Common myeloid progenitor, CD34-positive (primary cell): ENCODE measurements at regions of chr4 and their contacts with region 1.

Region 1: GRCh38 chr4:27010334-27010940 is 149.8 kb downstream of the STIM2 start:
- DNase-seq: peak; percentile 63 to 81 (median 73)
- H3K4me3 ChIP-seq: no peak overlapping the region
- H3K27ac ChIP-seq: no peak overlapping the region
- H3K4me1 ChIP-seq: no peaks in the 10 kb centered on the region
- H3K27me3 ChIP-seq: no peaks in the 10 kb centered on the region

Region 2: GRCh38 chr4:26490111-26490959 is 520.1 kb before region 1 on chr4 and contains the start of gene CCKAR:
- CTCF ChIA-PET with region 1: no interaction called
- POLR2A ChIA-PET with region 1: no interaction called
- DNase-seq: no peak
- H3K4me3 ChIP-seq: no peak within 1 kb of the TSS
- H3K27ac ChIP-seq: no peak within 1 kb of the TSS
- H3K4me1 ChIP-seq: no peaks in the 10 kb centered on the region
- H3K27me3 ChIP-seq: peaks cover 0 to 13% (median 2%) of the 10 kb centered on the region in 5 experiments

Region 3: GRCh38 chr4:26719954-26720552 is 290.4 kb before region 1 on chr4:
- CTCF ChIA-PET with region 1: interaction called, 10 read pairs
- POLR2A ChIA-PET with region 1: no interaction called
- DNase-seq: peak in 2 of 3 donors; percentile 9 to 19
- H3K4me3 ChIP-seq: no peak overlapping the region
- H3K27ac ChIP-seq: no peak overlapping the region
- H3K4me1 ChIP-seq: peaks cover 0 to 3% (median 0%) of the 10 kb centered on the region in 4 experiments
- H3K27me3 ChIP-seq: no peaks in the 10 kb centered on the region